ENCODE measurements at regions of chr5 and their contacts with region 1.

Region 1: DNA sequence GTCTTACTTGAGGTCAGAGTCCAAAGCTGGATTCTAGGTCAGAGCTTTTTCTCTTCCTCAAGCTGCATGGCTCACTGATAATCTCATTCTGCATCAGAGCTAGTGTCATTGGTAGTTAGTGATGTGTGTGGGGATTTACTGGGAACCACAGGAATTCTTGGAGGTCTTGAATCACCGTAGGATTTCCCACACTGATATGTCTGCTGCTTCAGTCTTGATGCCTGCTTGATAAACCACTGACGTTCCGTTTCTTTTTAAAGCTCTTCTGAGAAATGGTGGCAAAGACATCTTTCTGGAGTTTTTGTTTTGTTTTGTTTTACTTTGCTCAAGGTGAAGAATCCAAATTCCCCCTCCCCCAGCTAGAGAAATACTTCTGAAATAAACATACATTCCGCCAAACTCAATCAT is 1.2 kb upstream of the GARIN3 start:
- DNase-seq: peak; percentile 9
- H3K4me3 Mint-ChIP-seq: peak overlapping the region; percentile 43
- H3K27ac Mint-ChIP-seq: peak overlapping the region; percentile 86
- H3K4me1 Mint-ChIP-seq: peaks cover 75% of the 10 kb centered on the region
- H3K27me3 Mint-ChIP-seq: no peaks in the 10 kb centered on the region

Region 2: GRCh38 chr5:157198277-157198986 is 31.2 kb after region 1 on chr5:
- intact Hi-C with region 1: loop called (anchors 1 kb)
- DNase-seq: no peak
- H3K4me3 Mint-ChIP-seq: peak overlapping the region; percentile 55
- H3K27ac Mint-ChIP-seq: peak overlapping the region; percentile 84
- H3K4me1 Mint-ChIP-seq: peaks cover 85% of the 10 kb centered on the region
- H3K27me3 Mint-ChIP-seq: no peaks in the 10 kb centered on the region

Region 3: GRCh38 chr5:157245477-157245876 is 78.3 kb after region 1 on chr5:
- intact Hi-C with region 1: no loop called
- DNase-seq: no peak
- H3K4me3 Mint-ChIP-seq: no peak overlapping the region
- H3K27ac Mint-ChIP-seq: peak overlapping the region; percentile 60
- H3K4me1 Mint-ChIP-seq: peaks cover 59% of the 10 kb centered on the region
- H3K27me3 Mint-ChIP-seq: no peaks in the 10 kb centered on the region